Transverse colon (tissue), 4 donors: ENCODE measurements at regions of chr9 and their contacts with region 1.

Region 1: GRCh38 chr9:37903647-37904444 is at the start of gene SLC25A51:
- DNase-seq: peak; percentile 96
- H3K4me3 ChIP-seq: peak within 1 kb of the TSS; percentile 84 to 99 (median 90)
- H3K27ac ChIP-seq: peak within 1 kb of the TSS; percentile 89 to 99 (median 96)
- H3K4me1 ChIP-seq: peaks cover 13 to 23% (median 21%) of the 10 kb centered on the region in 4 donors
- H3K27me3 ChIP-seq: no peaks in the 10 kb centered on the region
- CTCF ChIP-seq: peak; percentile 85 to 98 (median 91)
- EP300 ChIP-seq: no peak
- POLR2A ChIP-seq: peak; percentile 70
- total RNA-seq, gene SLC25A51: 15.7 to 30.0 (median 24.1) TPM

Region 2: GRCh38 chr9:37485389-37486219 is 418.2 kb before region 1 on chr9 and contains the start of gene POLR1E:
- in situ Hi-C with region 1: loop called in 1 of 4 experiments (anchors 25 kb)
- intact Hi-C with region 1: no loop called
- DNase-seq: peak; percentile 97
- H3K4me3 ChIP-seq: peak within 1 kb of the TSS; percentile 57 to 90 (median 63)
- H3K27ac ChIP-seq: peak within 1 kb of the TSS; percentile 82 to 88 (median 86)
- H3K4me1 ChIP-seq: peaks cover 16 to 23% (median 19%) of the 10 kb centered on the region in 4 donors
- H3K27me3 ChIP-seq: no peaks in the 10 kb centered on the region
- CTCF ChIP-seq: no peak
- EP300 ChIP-seq: no peak
- POLR2A ChIP-seq: peak; percentile 76
- total RNA-seq, gene POLR1E: 4.0 to 15.7 (median 9.0) TPM

Region 3: DNA sequence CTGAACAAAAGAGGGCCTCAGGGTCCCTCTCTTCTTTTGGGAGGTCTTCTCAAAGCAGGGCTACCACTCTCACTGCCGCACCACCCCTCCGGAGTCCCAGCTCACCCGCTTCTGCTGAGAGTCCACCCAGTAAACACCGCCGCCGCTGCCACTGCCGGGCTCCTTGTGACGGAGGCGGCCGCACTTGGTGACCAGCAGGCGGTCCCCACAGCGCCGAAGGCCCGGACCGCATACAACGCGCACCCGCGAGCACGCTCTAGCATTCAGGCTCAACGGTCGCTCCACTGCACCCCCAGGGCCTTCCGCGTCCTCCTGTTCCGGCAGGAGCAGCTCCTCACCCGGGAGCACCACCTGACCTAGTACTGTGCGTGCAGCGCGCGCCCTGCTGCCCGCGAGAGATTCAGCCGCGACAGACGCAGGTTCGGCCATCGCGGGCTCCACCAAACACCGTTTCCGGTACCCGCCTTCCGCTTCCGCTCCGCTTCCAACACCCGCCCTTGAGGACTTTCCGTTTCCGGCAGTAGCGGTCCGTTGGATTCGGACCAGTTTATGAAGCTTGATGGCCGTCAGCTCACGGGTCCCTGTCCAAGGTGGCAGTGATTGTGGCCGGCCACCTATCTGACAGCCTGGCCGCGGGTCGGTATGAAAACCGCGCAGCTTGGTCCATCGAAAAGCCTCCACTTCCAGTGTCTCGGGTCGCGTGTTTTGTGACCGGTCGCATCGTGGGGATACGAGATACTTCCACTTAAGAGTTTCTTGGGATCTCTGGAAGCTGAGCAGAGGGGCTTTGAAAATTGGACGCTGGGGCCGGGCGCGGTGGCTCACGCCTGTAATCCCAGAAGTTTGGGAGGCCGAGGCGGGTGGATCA is 119.0 kb before region 1 on chr9 and contains the start of gene EXOSC3:
- in situ Hi-C with region 1: loop called in 1 of 4 experiments (anchors 25 kb)
- intact Hi-C with region 1: no loop called
- DNase-seq: peak; percentile 91
- H3K4me3 ChIP-seq: peak within 1 kb of the TSS; percentile 68 to 93 (median 88)
- H3K27ac ChIP-seq: peak within 1 kb of the TSS; percentile 84 to 93 (median 89)
- H3K4me1 ChIP-seq: peaks cover 11 to 23% (median 15%) of the 10 kb centered on the region in 4 donors
- H3K27me3 ChIP-seq: no peaks in the 10 kb centered on the region
- CTCF ChIP-seq: peak in 3 of 5 experiments; percentile 10 to 33 (median 31)
- EP300 ChIP-seq: no peak
- POLR2A ChIP-seq: peak; percentile 75
- total RNA-seq, gene EXOSC3: 2.6 to 46.2 (median 14.7) TPM

Region 4: DNA sequence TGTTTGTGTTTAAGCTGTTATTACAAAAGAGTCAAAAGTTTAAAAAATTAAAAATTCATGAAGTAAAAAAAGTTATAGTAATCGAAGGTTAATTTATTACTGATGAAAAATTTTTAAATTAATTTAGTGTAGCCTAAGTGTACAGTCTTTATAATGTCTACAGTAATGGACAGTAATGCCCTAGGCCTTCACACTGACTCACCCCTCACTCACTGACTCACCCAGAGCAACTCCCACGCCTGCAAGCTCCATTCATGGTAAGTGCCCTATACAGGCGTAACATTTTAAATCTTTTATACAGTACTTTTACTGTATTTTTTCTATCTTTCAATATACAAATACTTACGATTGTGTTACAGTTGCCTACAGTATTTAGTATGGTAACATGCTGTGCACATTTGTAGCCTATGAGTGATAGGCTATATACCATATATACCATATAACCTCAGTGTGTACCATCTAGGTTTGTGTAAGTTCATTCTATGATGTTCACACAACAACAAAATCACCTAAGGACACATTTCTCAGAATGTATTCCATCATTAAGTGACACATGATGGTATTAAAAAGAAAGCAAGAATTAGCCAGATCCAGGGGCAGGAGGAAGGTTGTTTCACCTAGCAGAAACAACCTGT is 63.2 kb before region 1 on chr9:
- in situ Hi-C with region 1: no loop called
- intact Hi-C with region 1: no loop called
- DNase-seq: no peak
- H3K4me3 ChIP-seq: no peak overlapping the region
- H3K27ac ChIP-seq: no peak overlapping the region
- H3K4me1 ChIP-seq: no peaks in the 10 kb centered on the region
- H3K27me3 ChIP-seq: no peaks in the 10 kb centered on the region
- CTCF ChIP-seq: no peak
- EP300 ChIP-seq: no peak
- POLR2A ChIP-seq: no peak

Region 5: DNA sequence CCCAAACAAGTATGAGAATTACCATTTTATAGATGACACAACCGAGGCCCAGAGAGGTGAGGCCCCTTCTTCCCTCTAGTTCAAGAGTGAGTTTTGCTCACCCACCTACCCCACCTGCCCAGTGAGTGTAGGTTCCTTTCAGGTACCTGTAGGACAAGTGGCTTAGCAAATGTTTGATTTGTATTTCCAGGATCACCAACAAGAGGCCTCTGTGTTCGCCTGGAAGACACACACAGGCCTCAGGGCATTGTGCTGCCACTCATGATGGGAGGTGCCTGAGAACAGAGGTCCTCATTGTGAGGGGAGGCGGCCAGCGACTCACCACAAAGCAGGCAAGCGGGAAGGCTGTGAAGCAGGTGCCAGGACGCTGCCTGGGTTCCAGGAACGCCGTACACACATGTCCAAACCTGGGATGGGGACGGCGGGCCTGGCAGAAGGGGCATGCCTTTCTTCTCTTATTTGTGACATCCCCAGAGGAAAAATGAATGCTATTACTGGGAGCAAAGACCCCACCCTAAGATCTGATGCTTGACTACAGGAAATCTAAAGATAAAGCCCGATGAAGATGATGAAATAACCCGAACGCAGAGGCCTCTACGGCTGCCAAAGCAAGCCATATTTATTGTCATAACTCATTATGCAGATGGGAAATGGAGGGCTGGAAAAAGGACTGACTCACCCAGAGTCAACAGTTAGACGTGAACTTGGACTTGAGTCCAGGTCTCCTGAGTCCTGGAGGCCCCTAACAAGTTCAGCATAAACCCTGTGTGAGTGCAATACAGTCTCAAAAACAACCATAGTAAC is 60.3 kb after region 1 on chr9:
- in situ Hi-C with region 1: no loop called
- intact Hi-C with region 1: no loop called
- DNase-seq: peak; percentile 52
- H3K4me3 ChIP-seq: no peak overlapping the region
- H3K27ac ChIP-seq: peak overlapping the region; percentile 66 to 88 (median 77)
- H3K4me1 ChIP-seq: peaks cover 8 to 57% (median 51%) of the 10 kb centered on the region in 4 donors
- H3K27me3 ChIP-seq: no peaks in the 10 kb centered on the region
- CTCF ChIP-seq: no peak
- EP300 ChIP-seq: no peak
- POLR2A ChIP-seq: no peak

Region 6: GRCh38 chr9:38160613-38161215 is 256.9 kb after region 1 on chr9:
- in situ Hi-C with region 1: loop called in 3 of 4 experiments (anchors 5 to 25 kb)
- intact Hi-C with region 1: no loop called
- DNase-seq: peak; percentile 74
- H3K4me3 ChIP-seq: no peak overlapping the region
- H3K27ac ChIP-seq: no peak overlapping the region
- H3K4me1 ChIP-seq: no peaks in the 10 kb centered on the region
- H3K27me3 ChIP-seq: no peaks in the 10 kb centered on the region
- CTCF ChIP-seq: peak; percentile 78 to 88 (median 82)
- EP300 ChIP-seq: no peak
- POLR2A ChIP-seq: no peak

Region 7: DNA sequence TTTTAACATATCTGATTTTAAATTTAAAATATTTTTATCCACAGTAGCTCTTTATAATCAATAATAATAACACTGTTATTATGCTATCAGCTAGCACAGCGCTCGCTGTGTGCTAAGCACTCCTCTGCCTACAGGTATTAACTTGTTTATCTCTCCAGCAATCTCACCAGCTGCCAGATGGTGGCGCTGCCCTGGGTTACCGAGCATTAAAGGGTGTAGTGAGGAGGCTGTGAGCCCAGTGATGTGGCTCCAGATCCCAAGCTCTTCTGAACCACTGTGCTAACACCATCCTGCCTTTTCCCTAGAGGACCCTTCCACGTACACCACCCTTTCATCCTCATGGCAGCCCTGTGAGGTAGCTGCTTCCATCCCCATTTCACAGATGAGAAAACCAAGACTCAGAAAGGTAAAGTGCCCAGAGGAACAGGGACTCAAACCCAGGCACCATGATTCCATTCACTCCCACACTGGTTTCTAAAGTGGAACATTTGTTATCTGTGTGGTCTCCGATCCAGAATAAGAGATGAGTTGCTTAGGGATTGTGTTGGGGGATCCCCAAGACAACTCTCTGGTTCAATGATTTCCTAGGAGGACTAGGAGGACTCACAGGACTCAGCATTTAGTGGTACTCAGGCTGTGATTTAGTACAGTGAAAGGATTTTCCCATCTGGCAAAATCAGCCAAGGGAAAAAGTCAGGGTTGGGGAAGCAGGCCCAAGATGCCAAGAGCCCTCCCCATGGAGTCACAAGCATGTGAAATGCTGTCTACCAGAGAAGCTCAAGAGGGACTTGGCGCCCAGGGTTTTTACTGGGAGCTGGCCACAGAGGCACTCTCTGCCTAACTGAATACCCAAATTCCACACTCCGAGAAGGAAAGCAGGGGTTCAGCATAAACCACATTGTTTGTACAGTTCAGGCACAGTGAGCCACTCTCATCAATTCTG is 513.4 kb after region 1 on chr9:
- in situ Hi-C with region 1: loop called in 1 of 4 experiments (anchors 25 kb)
- intact Hi-C with region 1: no loop called
- DNase-seq: peak; percentile 35
- H3K4me3 ChIP-seq: no peak overlapping the region
- H3K27ac ChIP-seq: no peak overlapping the region
- H3K4me1 ChIP-seq: no peaks in the 10 kb centered on the region
- H3K27me3 ChIP-seq: peaks cover 10% of the 10 kb centered on the region
- CTCF ChIP-seq: peak in 3 of 5 experiments; percentile 26 to 46 (median 39)
- EP300 ChIP-seq: no peak
- POLR2A ChIP-seq: no peak